Heart left ventricle (tissue), 16 donors: ENCODE measurements at regions of chr2 and their contacts with region 1.

Region 1: GRCh38 chr2:9618410-9618809 is 12.4 kb downstream of the YWHAQ start:
- DNase-seq: no peak
- ATAC-seq: no peak
- H3K4me3 ChIP-seq: no peak overlapping the region
- H3K27ac ChIP-seq: no peak overlapping the region
- H3K4me1 ChIP-seq: peaks cover 0 to 91% (median 57%) of the 10 kb centered on the region in 12 donors
- H3K27me3 ChIP-seq: no peaks in the 10 kb centered on the region
- CTCF ChIP-seq: no peak
- POLR2A ChIP-seq: no peak

Region 2: GRCh38 chr2:9578467-9579235 is 39.8 kb before region 1 on chr2:
- intact Hi-C with region 1: loop called in 1 of 10 experiments (anchors 5 kb)
- DNase-seq: no peak
- ATAC-seq: peak in 2 of 4 donors; percentile 3 to 18
- H3K4me3 ChIP-seq: no peak overlapping the region
- H3K27ac ChIP-seq: peak overlapping the region in 2 of 12 donors; percentile 13 to 19
- H3K4me1 ChIP-seq: peaks cover 0 to 34% (median 13%) of the 10 kb centered on the region in 12 donors
- H3K27me3 ChIP-seq: no peaks in the 10 kb centered on the region
- CTCF ChIP-seq: no peak
- POLR2A ChIP-seq: no peak